ENCODE measurements at regions of chr13 and their contacts with region 1.

Region 1: DNA sequence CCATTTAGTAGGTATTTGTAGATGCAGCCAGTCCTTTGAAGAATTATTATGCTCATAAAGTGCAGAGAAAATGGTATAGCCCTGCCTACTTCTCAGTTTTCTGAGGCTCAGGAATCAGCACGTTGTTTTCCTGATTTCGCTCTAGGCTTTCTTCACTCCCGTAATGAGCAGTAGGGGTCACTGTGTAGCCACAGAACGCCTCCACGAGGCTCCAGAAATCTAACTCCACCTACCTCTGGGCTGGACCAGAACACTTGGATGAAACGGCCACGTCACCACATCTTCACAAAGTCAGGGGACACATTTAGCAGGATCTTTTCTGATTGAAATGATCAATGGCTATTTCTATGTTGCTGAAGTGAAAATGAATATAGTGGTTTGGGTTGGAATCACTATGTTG is 49.8 kb upstream of the GTF3A start:
- DNase-seq: peak; percentile 39 to 77
- ATAC-seq: peak; percentile 79 to 93 (median 83)
- H3K4me3 ChIP-seq: no peak overlapping the region
- H3K4me3 Mint-ChIP-seq: no peak overlapping the region
- H3K27ac ChIP-seq: no peak overlapping the region
- H3K27ac Mint-ChIP-seq: no peak overlapping the region
- H3K4me1 ChIP-seq: no peaks in the 10 kb centered on the region
- H3K4me1 Mint-ChIP-seq: peaks cover 6 to 11% of the 10 kb centered on the region in 2 donors
- H3K27me3 ChIP-seq: no peaks in the 10 kb centered on the region
- H3K27me3 Mint-ChIP-seq: peaks cover 6 to 7% of the 10 kb centered on the region in 2 donors
- CTCF ChIP-seq: peak; percentile 72

Region 2: GRCh38 chr13:27533155-27533643 is 158.5 kb after region 1 on chr13:
- intact Hi-C with region 1: loop called (anchors 5 kb)
- DNase-seq: peak; percentile 61 to 67
- ATAC-seq: peak; percentile 78 to 89 (median 85)
- H3K4me3 ChIP-seq: peak overlapping the region; percentile 8
- H3K4me3 Mint-ChIP-seq: no peak overlapping the region
- H3K27ac ChIP-seq: no peak overlapping the region
- H3K27ac Mint-ChIP-seq: peak overlapping the region in 1 of 2 donors; percentile 43
- H3K4me1 ChIP-seq: peaks cover 10% of the 10 kb centered on the region
- H3K4me1 Mint-ChIP-seq: peaks cover 11 to 12% of the 10 kb centered on the region in 2 donors
- H3K27me3 ChIP-seq: no peaks in the 10 kb centered on the region
- H3K27me3 Mint-ChIP-seq: peaks cover 0 to 12% of the 10 kb centered on the region in 2 donors
- CTCF ChIP-seq: peak; percentile 79

Region 3: GRCh38 chr13:27712421-27712820 is 337.8 kb after region 1 on chr13:
- intact Hi-C with region 1: loop called (anchors 2 kb)
- DNase-seq: peak in 1 of 2 donors; percentile 40
- ATAC-seq: peak in 1 of 3 donors; percentile 50
- H3K4me3 ChIP-seq: no peak overlapping the region
- H3K4me3 Mint-ChIP-seq: no peak overlapping the region
- H3K27ac ChIP-seq: no peak overlapping the region
- H3K27ac Mint-ChIP-seq: no peak overlapping the region
- H3K4me1 ChIP-seq: no peaks in the 10 kb centered on the region
- H3K4me1 Mint-ChIP-seq: no peaks in the 10 kb centered on the region
- H3K27me3 ChIP-seq: no peaks in the 10 kb centered on the region
- H3K27me3 Mint-ChIP-seq: peaks cover 7 to 16% of the 10 kb centered on the region in 2 donors
- CTCF ChIP-seq: peak; percentile 16

Region 4: GRCh38 chr13:27953676-27954405 is 579.2 kb after region 1 on chr13:
- intact Hi-C with region 1: loop called (anchors 10 kb)
- DNase-seq: peak; percentile 48 to 71
- ATAC-seq: peak; percentile 76 to 95 (median 80)
- H3K4me3 ChIP-seq: no peak overlapping the region
- H3K4me3 Mint-ChIP-seq: peak overlapping the region; percentile 86
- H3K27ac ChIP-seq: no peak overlapping the region
- H3K27ac Mint-ChIP-seq: no peak overlapping the region
- H3K4me1 ChIP-seq: peaks cover 15% of the 10 kb centered on the region
- H3K4me1 Mint-ChIP-seq: peaks cover 6 to 12% of the 10 kb centered on the region in 2 donors
- H3K27me3 ChIP-seq: peaks cover 34% of the 10 kb centered on the region
- H3K27me3 Mint-ChIP-seq: peaks cover 47 to 71% of the 10 kb centered on the region in 2 donors
- CTCF ChIP-seq: peak; percentile 59

Region 5: GRCh38 chr13:27980280-27980998 is 605.8 kb after region 1 on chr13:
- intact Hi-C with region 1: loop called (anchors 1 kb)
- DNase-seq: no peak
- ATAC-seq: no peak
- H3K4me3 ChIP-seq: no peak overlapping the region
- H3K4me3 Mint-ChIP-seq: no peak overlapping the region
- H3K27ac ChIP-seq: no peak overlapping the region
- H3K27ac Mint-ChIP-seq: no peak overlapping the region
- H3K4me1 ChIP-seq: peaks cover 13% of the 10 kb centered on the region
- H3K4me1 Mint-ChIP-seq: no peaks in the 10 kb centered on the region
- H3K27me3 ChIP-seq: peaks cover 36% of the 10 kb centered on the region
- H3K27me3 Mint-ChIP-seq: peaks cover 61 to 67% of the 10 kb centered on the region in 2 donors
- CTCF ChIP-seq: no peak

Measured in natural killer cell (primary cell).